ENCODE measurements at regions of chr6 and their contacts with region 1.

Region 1: DNA sequence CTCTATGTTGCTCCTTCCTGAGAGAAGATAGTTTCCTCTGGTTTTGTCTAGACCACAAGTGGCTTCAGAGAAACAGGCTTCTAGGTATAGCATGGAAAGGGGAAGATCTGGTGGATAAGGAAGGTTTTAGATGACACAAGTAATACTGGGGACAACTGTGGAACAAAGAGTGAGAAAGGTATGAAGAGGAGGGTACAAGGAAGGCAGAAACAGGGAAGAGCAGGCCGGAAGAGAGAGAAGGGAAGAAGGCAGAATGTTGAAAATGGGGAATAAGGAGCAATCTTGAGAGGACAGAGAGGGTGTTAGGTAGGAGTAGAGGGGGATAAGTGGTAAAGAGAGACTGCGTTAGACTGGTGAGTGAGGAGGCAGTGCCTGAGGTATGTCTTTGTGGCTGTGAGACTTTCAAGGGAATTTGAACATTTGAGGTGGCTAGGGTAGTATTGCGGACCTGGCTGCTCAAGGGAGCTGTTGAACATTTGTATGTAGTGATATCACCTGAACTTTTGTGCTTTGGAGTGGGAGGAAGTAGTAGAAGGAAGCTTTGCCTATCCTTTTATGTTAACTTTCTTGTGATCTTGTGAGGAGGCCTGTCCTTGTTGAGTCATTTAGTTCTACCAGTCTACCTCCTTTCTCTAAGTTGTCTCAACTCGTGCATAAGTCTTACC is 69.5 kb downstream of the FOXO3 start:
- DNase-seq: peak; percentile 39
- H3K4me3 Mint-ChIP-seq: no peak overlapping the region
- H3K27ac Mint-ChIP-seq: peak overlapping the region; percentile 21
- H3K4me1 Mint-ChIP-seq: peaks cover 61% of the 10 kb centered on the region
- H3K27me3 Mint-ChIP-seq: no peaks in the 10 kb centered on the region

Region 2: DNA sequence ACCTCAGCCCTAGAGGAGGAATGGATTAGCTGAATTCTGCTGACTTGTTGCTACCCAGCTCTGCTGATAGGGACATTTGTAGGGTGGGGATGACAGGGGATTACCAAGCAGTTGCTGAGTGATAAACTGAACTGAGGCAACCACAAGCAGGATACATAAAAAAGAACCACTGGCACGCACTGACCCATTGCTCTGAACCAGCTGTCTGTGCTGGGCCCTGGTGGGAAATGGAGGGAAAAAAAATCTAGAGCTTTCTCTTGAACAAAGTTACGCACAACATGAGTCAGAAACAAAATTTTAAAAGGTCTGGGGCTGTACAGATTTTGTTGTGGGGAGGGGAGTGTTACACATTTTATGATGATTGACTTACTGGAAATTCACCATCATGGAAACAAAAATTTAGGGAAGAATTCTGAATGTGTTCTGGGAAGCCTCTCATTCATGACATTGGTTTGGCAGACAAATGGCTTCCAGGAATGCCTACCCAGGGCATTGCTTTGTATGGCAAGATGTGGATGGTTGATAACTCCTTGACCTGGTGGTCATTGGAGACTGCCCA is 31.8 kb before region 1 on chr6:
- CTCF ChIA-PET with region 1: no interaction called
- POLR2A ChIA-PET with region 1: no interaction called
- intact Hi-C with region 1: loop called (anchors 2 kb)
- DNase-seq: peak; percentile 64
- H3K4me3 Mint-ChIP-seq: no peak overlapping the region
- H3K27ac Mint-ChIP-seq: peak overlapping the region; percentile 44
- H3K4me1 Mint-ChIP-seq: peaks cover 19% of the 10 kb centered on the region
- H3K27me3 Mint-ChIP-seq: no peaks in the 10 kb centered on the region

Region 3: DNA sequence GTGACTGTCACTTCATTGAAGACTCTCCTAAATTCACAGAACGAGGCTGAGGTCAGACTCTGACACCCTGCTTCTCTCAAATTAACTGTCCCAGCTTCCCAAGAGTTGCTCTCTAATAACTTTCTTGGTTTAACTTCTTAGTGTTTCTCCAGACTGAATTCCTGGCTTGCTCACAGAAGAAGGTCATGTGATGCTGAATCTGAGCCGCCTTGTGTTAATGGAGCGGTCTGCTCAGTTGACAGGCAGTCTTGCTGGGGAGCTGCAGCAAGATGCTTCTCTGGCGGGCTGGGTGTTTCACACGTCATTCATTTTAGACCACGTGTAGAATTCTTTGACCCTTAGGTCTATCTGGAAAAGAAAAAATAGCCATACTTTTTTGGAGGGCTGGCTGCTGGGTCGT is 37.8 kb after region 1 on chr6:
- CTCF ChIA-PET with region 1: no interaction called
- POLR2A ChIA-PET with region 1: interaction called, 5 read pairs
- intact Hi-C with region 1: loop called (anchors 5 kb)
- DNase-seq: no peak
- H3K4me3 Mint-ChIP-seq: no peak overlapping the region
- H3K27ac Mint-ChIP-seq: no peak overlapping the region
- H3K4me1 Mint-ChIP-seq: peaks cover 56% of the 10 kb centered on the region
- H3K27me3 Mint-ChIP-seq: no peaks in the 10 kb centered on the region